Naive thymus-derived CD4-positive, alpha-beta T cell (primary cell): ENCODE measurements at regions of chr7 and their contacts with region 1.

Region 1: DNA sequence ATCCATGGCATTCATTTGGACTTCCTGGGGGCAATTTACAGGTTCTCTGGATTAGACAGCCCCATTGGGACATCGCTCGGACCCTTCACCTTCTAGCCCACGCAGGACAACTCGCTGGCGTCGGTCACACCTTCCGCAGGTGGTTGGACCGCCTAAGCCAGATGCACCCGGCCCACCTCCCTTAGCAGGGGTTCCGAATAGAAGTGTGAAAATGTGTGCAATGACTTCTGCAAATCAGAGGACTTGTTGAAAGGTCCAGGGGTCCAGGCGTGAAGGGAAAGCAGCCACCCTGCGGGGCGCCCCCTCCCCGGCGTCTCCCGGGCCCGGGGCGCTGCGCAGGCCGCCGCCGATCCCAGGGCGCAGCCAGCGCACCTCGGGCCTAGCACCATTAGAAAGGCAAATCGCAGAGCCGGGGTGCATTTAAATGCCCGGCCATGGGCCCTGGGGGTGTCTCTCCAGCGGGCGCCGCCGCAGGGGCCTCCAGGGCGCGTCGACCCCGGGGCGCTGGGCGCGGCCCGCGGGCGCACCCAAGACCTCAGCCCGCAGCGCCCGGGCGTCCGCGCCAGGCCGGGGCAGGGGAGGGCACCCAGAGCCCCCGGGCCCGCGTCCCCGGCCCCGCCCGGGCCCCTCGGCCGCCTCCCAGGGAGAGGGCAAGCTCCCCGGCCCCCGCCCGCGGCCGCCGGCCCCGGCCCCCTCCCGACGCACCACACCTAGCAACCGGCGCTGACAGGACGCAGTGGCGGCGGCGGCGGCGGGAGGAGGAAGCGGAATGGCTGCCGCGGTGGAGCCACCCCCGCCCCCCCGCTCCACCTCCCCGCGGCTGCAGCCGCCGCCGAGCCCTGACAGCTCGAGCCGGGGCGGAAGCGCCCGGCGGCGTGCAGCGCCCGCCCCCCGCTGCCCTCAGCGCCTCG is 1.2 kb downstream of the JAZF1 start:
- DNase-seq: peak; percentile 57 to 72 (median 71)
- ATAC-seq: peak; percentile 85
- H3K4me3 ChIP-seq: peak overlapping the region; percentile 51
- H3K4me3 Mint-ChIP-seq: peak overlapping the region; percentile 55 to 95 (median 72)
- H3K27ac ChIP-seq: peak overlapping the region; percentile 48
- H3K27ac Mint-ChIP-seq: peak overlapping the region in 8 of 9 donors; percentile 33 to 85 (median 61)
- H3K4me1 ChIP-seq: peaks cover 5 to 11% of the 10 kb centered on the region in 2 donors
- H3K4me1 Mint-ChIP-seq: peaks cover 11 to 50% (median 24%) of the 10 kb centered on the region in 7 donors
- H3K27me3 ChIP-seq: no peaks in the 10 kb centered on the region
- H3K27me3 Mint-ChIP-seq: peaks cover 0 to 43% (median 0%) of the 10 kb centered on the region in 5 donors

Region 2: GRCh38 chr7:26864309-26865093 is 1314.9 kb before region 1 on chr7 and contains the start of gene SKAP2:
- CTCF ChIA-PET with region 1: no interaction called
- POLR2A ChIA-PET with region 1: no interaction called
- intact Hi-C with region 1: loop called (anchors 10 kb)
- DNase-seq: peak; percentile 41 to 89 (median 63)
- ATAC-seq: peak; percentile 93
- H3K4me3 ChIP-seq: peak within 1 kb of the TSS; percentile 88
- H3K4me3 Mint-ChIP-seq: peak within 1 kb of the TSS; percentile 72 to 92 (median 88)
- H3K27ac ChIP-seq: peak within 1 kb of the TSS; percentile 23
- H3K27ac Mint-ChIP-seq: peak within 1 kb of the TSS; percentile 36 to 89 (median 74)
- H3K4me1 ChIP-seq: peaks cover 0 to 4% of the 10 kb centered on the region in 2 donors
- H3K4me1 Mint-ChIP-seq: peaks cover 5 to 24% (median 19%) of the 10 kb centered on the region in 7 donors
- H3K27me3 ChIP-seq: peaks cover 0 to 9% of the 10 kb centered on the region in 2 donors
- H3K27me3 Mint-ChIP-seq: peaks cover 46 to 68% (median 49%) of the 10 kb centered on the region in 5 donors
- total RNA-seq, gene SKAP2: 2.7 to 31.4 (median 5.1) TPM

Region 3: GRCh38 chr7:28096713-28097112 is 82.7 kb before region 1 on chr7:
- CTCF ChIA-PET with region 1: no interaction called
- POLR2A ChIA-PET with region 1: no interaction called
- intact Hi-C with region 1: loop called in 1 of 2 experiments (anchors 5 kb)
- DNase-seq: peak in 7 of 9 donors; percentile 26 to 62 (median 47)
- ATAC-seq: peak; percentile 84
- H3K4me3 ChIP-seq: no peak overlapping the region
- H3K4me3 Mint-ChIP-seq: no peak overlapping the region
- H3K27ac ChIP-seq: no peak overlapping the region
- H3K27ac Mint-ChIP-seq: no peak overlapping the region
- H3K4me1 ChIP-seq: no peaks in the 10 kb centered on the region
- H3K4me1 Mint-ChIP-seq: peaks cover 0 to 25% (median 10%) of the 10 kb centered on the region in 7 donors
- H3K27me3 ChIP-seq: no peaks in the 10 kb centered on the region
- H3K27me3 Mint-ChIP-seq: no peaks in the 10 kb centered on the region

Region 4: GRCh38 chr7:28272461-28272877 is 93.1 kb after region 1 on chr7:
- CTCF ChIA-PET with region 1: no interaction called
- POLR2A ChIA-PET with region 1: no interaction called
- intact Hi-C with region 1: loop called in 1 of 2 experiments (anchors 1 kb)
- DNase-seq: peak in 6 of 9 donors; percentile 7 to 20 (median 15)
- ATAC-seq: peak; percentile 73
- H3K4me3 ChIP-seq: no peak overlapping the region
- H3K4me3 Mint-ChIP-seq: peak overlapping the region in 8 of 10 donors; percentile 3 to 78 (median 62)
- H3K27ac ChIP-seq: no peak overlapping the region
- H3K27ac Mint-ChIP-seq: peak overlapping the region in 1 of 9 donors; percentile 31
- H3K4me1 ChIP-seq: no peaks in the 10 kb centered on the region
- H3K4me1 Mint-ChIP-seq: peaks cover 0 to 7% (median 5%) of the 10 kb centered on the region in 7 donors
- H3K27me3 ChIP-seq: no peaks in the 10 kb centered on the region
- H3K27me3 Mint-ChIP-seq: peaks cover 5 to 40% (median 24%) of the 10 kb centered on the region in 5 donors

Region 5: DNA sequence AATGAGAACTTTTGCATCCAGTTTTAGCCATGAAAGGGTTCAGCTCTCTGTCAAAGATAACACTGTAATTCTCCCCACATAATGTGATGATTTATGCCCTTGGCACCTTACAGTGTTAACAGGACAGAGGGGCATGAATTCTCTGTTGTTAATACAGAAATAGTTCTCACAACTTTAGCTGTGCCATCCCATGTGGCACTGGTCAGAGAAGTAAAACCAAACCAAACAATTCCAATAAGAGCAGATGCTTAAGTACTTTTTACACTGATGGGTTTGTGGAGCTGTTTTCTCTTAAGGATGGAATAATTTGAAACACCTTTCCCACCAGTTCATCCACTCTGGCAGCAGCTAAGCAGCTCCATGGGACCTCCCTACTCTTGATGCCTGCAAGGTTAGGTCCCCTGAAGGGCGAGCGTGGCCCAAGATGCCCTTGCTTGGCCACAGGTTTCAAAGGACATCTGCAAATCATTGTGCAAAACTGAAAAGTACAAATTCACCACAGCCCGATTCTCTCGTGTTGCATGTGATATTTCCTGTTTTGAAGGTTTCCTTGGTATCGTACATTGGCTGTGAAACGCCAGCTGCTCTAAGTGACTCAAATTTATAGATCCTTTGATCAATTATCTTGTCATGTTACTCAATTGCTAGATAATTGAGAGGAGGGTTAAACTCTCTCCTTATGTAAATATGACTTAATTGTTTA is 150.4 kb after region 1 on chr7:
- CTCF ChIA-PET with region 1: no interaction called
- POLR2A ChIA-PET with region 1: interaction called, 4 read pairs
- intact Hi-C with region 1: loop called in 1 of 2 experiments (anchors 2 kb)
- DNase-seq: peak in 7 of 9 donors; percentile 22 to 56 (median 42)
- ATAC-seq: peak; percentile 69
- H3K4me3 ChIP-seq: peak overlapping the region; percentile 15
- H3K4me3 Mint-ChIP-seq: peak overlapping the region; percentile 39 to 90 (median 82)
- H3K27ac ChIP-seq: peak overlapping the region; percentile 55
- H3K27ac Mint-ChIP-seq: peak overlapping the region; percentile 67 to 96 (median 91)
- H3K4me1 ChIP-seq: peaks cover 0 to 36% of the 10 kb centered on the region in 2 donors
- H3K4me1 Mint-ChIP-seq: peaks cover 18 to 47% (median 43%) of the 10 kb centered on the region in 7 donors
- H3K27me3 ChIP-seq: no peaks in the 10 kb centered on the region
- H3K27me3 Mint-ChIP-seq: peaks cover 0 to 4% (median 0%) of the 10 kb centered on the region in 5 donors